Dorsolateral prefrontal cortex (tissue), 120 donors: ENCODE measurements at regions of chr11 and their contacts with region 1.

Region 1: GRCh38 chr11:36296895-36297604 is 962 bp downstream of the PRR5L start:
- DNase-seq: no peak
- H3K4me3 ChIP-seq: peak overlapping the region in 58 of 59 donors; percentile 1 to 79 (median 48)
- H3K27ac ChIP-seq: peak overlapping the region in 57 of 59 donors; percentile 28 to 99 (median 93)
- H3K27me3 ChIP-seq: no peaks in the 10 kb centered on the region
- CTCF ChIP-seq: no peak

Region 2: DNA sequence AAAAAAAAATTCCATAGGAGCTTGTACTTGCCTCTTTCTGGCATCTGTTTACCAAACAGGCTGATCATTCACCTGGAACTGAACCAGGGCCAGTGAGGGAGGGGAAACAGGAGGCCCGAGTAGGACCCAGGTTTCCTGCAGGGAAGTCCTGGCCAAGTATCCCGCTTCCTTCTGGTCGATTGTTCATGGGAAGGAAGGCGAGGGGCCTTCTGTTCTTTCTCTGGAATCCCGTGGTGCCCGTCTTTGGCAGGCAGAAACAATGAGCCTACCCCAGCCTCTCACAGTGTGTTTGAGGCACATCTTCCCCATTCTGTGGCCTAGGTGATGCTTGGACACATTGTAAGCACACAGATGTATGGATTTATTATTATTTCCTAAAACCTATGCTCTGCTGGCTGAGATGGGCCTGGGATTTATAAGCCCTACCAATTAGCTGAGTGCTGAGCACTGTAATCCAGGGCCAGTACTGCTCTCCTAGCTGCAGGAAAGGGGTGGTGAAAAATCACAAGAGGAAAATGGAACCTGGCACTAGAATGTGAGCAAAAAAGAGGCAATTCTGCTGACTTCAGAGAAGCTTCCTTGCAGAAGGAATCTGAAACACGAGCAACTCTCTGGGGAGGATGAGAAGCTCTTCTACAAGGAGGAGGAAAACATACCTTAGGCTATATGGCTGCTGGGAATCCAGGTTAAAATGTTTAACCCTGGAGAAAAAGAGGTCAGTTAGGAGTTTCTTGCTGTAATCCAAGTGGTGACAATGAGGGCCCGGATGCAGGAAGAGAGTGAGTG is 52.5 kb after region 1 on chr11:
- intact Hi-C with region 1: loop called in 1 of 2 experiments (anchors 5 kb)
- DNase-seq: peak in 1 of 10 donors; percentile 18
- H3K4me3 ChIP-seq: no peak overlapping the region
- H3K27ac ChIP-seq: peak overlapping the region in 49 of 59 donors; percentile 14 to 79 (median 53)
- H3K27me3 ChIP-seq: no peaks in the 10 kb centered on the region
- CTCF ChIP-seq: peak in 1 of 56 donors; percentile 17